Posterior cingulate gyrus (tissue), 11 donors: ENCODE measurements at regions of chr6 and their contacts with region 1.

Region 1: DNA sequence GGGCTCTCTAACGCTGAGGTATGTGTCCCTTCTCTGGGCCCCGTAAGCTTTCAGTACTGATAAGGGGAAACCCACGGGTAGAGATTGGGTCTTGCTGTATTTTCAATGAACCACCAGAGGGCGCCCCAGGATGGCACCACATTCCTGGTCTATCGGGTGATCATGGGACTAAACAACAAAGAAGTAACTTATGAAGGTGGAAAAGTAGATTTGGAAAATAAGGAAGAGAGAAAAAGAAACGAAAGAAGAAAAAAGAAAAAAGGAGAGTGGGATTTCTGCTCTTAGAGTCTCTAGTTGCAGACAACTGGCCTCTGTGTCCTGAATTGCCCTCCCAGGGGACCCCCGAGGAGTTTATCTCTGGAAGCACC is 93.8 kb downstream of the GMPR start:
- DNase-seq: peak; percentile 65 to 97 (median 85)

Region 2: DNA sequence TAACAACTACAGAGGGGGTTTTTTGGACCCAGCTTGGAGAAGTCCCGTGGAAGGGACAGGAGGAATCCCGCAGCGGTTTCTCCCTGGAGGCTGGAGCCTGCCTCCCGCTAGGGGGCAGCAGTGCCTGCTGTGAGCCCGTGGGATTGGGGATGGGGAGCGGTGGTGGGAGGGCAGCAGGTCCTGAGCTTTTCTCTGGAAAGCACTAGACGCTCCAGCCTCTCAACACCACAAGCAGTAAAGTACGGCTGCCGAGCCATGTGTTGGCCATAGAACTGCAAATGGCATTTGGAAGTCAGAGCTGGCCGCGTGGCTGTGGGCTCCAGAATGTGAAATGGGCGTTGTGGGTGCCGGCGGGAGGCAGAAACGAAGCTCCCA is 46.0 kb before region 1 on chr6:
- intact Hi-C with region 1: loop called (anchors 1 kb)
- DNase-seq: peak in 9 of 10 donors; percentile 50 to 95 (median 72)

Region 3: DNA sequence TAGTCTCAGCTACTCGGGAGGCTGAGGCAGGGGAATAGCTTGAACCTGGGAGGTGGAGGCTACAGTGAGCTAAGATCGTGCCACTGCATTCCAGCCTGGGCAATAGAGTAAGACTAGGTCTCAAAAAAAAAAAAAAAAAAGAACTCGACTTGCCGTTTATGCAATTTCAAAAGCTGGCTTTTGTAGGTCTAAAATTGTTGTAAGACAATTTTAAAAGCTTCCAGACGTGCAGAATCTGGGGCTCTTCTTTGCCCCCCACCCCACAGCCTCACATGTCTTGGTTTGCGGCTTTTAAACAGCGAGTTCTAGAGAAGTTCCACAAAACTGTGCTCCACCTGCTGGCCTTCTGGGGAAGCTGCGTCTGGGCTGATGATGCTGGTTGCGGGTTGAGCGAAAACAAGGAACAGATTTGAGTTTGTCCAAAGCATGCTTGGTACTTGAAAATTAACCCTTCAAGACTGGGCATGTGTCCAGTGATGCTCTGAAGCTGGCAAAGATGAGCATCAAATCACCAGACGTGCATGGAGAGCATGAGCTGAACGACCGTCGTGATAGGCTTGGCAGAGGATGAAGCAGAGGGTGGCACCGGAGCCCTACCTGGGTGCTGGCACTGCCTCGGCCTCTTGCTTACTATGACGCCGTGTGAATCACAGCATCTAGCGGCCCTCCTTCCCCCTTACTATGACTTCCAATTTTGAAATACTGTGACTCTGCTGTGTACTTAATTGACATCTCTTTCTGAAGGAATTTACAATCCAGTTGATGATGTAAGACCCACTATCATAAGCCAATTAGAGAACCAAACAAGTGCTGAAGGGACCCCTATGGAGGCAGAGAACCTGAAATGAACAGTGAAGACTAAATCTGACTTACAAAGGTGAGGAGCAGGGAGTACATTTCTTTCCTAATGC is 77.6 kb after region 1 on chr6:
- intact Hi-C with region 1: loop called (anchors 1 kb)
- DNase-seq: peak; percentile 26 to 95 (median 67)

Region 4: DNA sequence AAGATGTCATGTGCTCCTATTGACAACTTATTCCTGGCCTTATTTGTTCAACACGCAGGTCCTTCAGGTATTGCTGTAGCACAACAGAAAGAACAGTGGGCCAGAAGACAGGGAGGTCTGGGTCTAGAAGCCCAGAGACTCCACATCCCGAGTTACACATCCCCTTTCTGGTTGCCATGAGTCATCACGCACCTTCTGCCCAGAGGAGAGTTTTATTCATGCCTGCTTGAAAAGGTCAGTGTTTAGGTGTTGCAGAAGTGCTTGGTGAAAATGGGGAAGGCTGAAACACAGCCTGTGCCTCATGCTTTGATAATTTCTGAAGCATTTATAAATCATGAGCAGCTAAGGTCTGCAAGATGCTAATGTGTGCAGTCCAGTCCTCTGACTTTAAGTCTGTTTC is 162.6 kb after region 1 on chr6:
- intact Hi-C with region 1: loop called (anchors 5 kb)
- DNase-seq: no peak

Region 5: DNA sequence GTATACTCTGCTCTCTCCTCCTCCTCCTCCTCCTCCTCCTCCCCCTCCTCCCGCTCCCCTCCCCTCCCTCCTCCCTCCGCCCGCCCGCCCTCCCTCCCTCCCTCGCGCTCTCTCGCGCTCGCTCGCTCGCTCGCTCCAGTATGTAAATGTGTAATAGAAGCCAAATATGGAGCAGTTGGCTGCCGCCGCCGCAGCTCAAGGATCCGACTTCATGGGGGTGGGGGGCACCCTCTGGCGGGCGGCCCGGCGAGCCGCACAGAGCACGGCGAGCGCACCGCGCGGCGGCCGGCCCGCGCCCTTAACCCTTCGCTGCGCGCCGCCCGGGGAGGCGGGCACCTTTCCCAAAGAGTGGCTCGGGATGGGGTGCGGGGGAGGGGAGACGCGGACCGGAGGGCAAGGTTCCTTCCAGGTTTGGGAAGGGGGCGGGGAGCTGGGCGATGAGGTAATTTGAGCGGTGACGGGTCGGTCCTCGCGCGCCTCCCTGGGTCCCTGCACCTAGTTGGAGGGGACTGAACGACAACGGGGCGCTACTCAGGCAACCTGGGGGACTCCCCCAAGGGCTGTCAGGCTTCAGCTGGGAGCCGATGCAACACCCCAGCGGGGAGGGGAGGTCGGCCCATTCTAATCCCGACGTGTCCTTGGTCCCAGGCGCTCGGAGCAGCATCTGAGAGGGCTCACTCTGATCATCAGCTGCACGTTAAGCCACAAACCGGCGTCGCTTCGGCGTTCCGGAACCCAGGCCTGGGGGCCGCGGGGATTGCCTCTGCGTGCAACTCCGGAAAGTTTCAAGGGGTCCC is 429.5 kb after region 1 on chr6:
- intact Hi-C with region 1: loop called (anchors 2 kb)
- DNase-seq: peak; percentile 57 to 96 (median 76)